ENCODE measurements at regions of chr10 and their contacts with region 1.

Region 1: GRCh38 chr10:31808258-31809218 is 120.1 kb downstream of the ARHGAP12 start:
- DNase-seq: peak; percentile 25
- CTCF ChIP-seq: peak; percentile 44

Region 2: DNA sequence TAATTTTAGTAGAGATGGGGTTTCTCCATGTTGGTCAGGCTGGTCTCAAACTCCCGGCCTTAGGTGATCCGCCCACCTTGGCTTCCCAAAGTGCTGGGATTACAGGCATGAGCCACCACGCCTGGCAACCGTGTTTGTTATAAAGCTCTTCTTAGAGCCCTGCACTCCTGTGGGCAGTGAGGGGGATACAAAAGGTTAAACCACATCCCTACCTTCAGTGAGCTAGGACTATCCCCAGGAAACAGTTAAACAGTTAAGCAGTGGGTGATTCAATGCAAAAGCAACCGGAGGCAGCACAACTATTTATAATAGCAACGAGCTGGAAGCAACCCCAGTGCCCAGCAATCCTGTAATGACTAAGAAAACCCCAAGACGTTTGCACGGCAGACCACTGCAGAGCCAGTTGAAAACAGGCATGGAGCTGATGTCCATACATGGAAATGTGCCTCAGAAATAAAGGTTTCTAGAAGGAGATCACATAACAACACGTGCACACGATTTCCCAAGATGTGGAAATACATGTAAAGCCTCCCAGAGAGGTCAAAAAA is 1071.8 kb before region 1 on chr10:
- in situ Hi-C with region 1: loop called (anchors 25 kb)
- DNase-seq: peak; percentile 56
- CTCF ChIP-seq: no peak

Measured in GM13977 (cell line).